ENCODE measurements at regions of chr11 and their contacts with region 1.

Region 1: DNA sequence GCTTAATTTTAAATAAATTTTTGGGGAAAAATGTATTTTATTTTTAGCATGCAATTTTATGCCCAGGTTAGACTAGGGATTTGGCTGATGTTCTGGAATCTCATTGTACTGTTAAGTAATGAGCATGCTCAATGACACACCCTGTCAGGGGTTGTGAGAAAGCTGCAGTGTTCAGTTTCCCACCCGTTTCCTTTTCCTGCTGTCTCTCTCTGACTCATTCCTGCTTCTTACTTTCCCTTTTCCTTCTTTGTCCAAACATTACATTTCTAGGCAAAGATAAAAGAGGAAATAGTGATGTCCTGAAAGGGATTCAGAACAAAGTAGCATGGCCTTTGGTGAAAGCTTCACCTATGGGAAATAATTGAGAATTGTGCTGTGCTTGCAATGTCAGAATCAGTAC is 22.7 kb downstream of the OOSP3 start:
- DNase-seq: no peak
- H3K4me3 ChIP-seq: no peak overlapping the region
- H3K4me3 Mint-ChIP-seq: no peak overlapping the region
- H3K27ac Mint-ChIP-seq: no peak overlapping the region
- H3K4me1 ChIP-seq: no peaks in the 10 kb centered on the region
- H3K4me1 Mint-ChIP-seq: no peaks in the 10 kb centered on the region
- H3K27me3 ChIP-seq: no peaks in the 10 kb centered on the region
- H3K27me3 Mint-ChIP-seq: no peaks in the 10 kb centered on the region
- CTCF ChIP-seq: no peak

Region 2: GRCh38 chr11:59841514-59841913 is 59.8 kb before region 1 on chr11:
- CTCF ChIA-PET with region 1: no interaction called
- POLR2A ChIA-PET with region 1: no interaction called
- intact Hi-C with region 1: loop called (anchors 5 kb)
- DNase-seq: no peak
- H3K4me3 ChIP-seq: no peak overlapping the region
- H3K4me3 Mint-ChIP-seq: no peak overlapping the region
- H3K27ac Mint-ChIP-seq: no peak overlapping the region
- H3K4me1 ChIP-seq: no peaks in the 10 kb centered on the region
- H3K4me1 Mint-ChIP-seq: no peaks in the 10 kb centered on the region
- H3K27me3 ChIP-seq: no peaks in the 10 kb centered on the region
- H3K27me3 Mint-ChIP-seq: no peaks in the 10 kb centered on the region
- CTCF ChIP-seq: no peak

Region 3: GRCh38 chr11:60544076-60544475 is 642.8 kb after region 1 on chr11:
- CTCF ChIA-PET with region 1: no interaction called
- POLR2A ChIA-PET with region 1: no interaction called
- intact Hi-C with region 1: no loop called
- DNase-seq: no peak
- H3K4me3 ChIP-seq: no peak overlapping the region
- H3K4me3 Mint-ChIP-seq: no peak overlapping the region
- H3K27ac Mint-ChIP-seq: no peak overlapping the region
- H3K4me1 ChIP-seq: no peaks in the 10 kb centered on the region
- H3K4me1 Mint-ChIP-seq: no peaks in the 10 kb centered on the region
- H3K27me3 ChIP-seq: 0 out of 2 replicates have a peak, but pooled peaks cover 1% of the 10 kb centered on the region
- H3K27me3 Mint-ChIP-seq: peaks cover 5% of the 10 kb centered on the region
- CTCF ChIP-seq: no peak